Left colon (tissue), 2 donors: ENCODE measurements at regions of chr14 and their contacts with region 1.

Region 1: GRCh38 chr14:32469388-32470160 is 140.5 kb downstream of the AKAP6 start:
- DNase-seq: no peak
- ATAC-seq: peak; percentile 64

Region 2: GRCh38 chr14:31937721-31938346 is 531.7 kb before region 1 on chr14:
- intact Hi-C with region 1: loop called in 1 of 2 experiments (anchors 10 kb)
- DNase-seq: peak; percentile 55 to 77
- ATAC-seq: peak; percentile 81

Region 3: DNA sequence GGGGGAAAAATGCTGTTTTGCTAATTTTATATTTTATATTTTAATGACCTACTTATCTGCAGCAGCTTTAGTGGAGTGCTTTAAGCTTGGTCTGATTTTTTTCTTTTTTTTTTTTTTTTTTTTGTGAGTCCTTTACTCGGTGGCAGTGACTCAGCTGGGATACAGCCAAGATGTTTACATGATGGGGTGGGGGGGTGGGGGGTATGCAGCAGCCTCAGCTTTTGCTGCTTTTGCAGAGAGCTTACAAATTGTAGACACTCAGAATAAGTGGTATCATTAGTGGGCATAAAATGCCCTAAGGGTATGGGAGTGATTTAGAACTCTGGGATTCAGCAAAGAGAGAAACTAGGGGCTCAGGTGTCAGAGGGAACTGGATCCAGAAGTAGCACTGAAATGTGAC is 430.7 kb before region 1 on chr14:
- intact Hi-C with region 1: no loop called
- DNase-seq: no peak
- ATAC-seq: no peak

Region 4: DNA sequence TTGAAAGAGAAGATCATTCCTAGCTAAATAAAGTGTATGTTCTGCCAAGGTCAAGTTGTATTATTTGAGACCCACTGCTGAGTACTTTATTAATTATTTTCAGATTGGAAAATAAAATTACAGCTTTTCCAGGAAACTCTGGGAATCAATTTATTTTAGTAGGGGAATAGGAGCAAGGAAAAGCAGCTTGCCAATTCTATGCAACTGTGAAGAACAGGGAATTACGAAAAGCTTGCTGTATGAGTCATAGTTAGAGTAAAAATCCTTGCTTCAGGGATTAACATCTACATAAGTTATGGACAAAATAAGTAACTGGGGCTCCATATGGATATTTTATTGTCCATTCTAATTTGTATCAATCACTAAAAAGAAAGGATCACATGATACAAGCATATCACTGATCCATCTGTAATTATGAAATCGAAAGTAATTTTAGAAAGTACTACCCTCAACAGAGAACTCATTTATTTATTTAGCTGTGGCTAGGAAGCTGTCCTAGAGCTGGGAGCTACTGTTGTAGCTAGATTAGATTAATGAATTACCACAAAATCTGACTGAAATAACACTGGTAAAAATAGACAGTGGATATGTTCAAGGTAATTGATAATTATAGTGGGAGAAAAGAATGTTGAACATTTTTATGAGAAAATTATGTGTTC is 165.6 kb after region 1 on chr14:
- intact Hi-C with region 1: no loop called
- DNase-seq: no peak
- ATAC-seq: no peak